Adrenal gland (tissue), 19 donors: ENCODE measurements at regions of chr12 and their contacts with region 1.

Region 1: GRCh38 chr12:71780237-71780822 is 25.7 kb downstream of the RAB21 start:
- DNase-seq: peak; percentile 29 to 79 (median 55)
- H3K4me3 ChIP-seq: no peak overlapping the region
- H3K27ac ChIP-seq: no peak overlapping the region
- H3K4me1 ChIP-seq: peaks cover 0 to 5% of the 10 kb centered on the region in 2 donors
- H3K27me3 ChIP-seq: no peaks in the 10 kb centered on the region
- CTCF ChIP-seq: peak; percentile 61 to 80 (median 70)
- POLR2A ChIP-seq: no peak

Region 2: DNA sequence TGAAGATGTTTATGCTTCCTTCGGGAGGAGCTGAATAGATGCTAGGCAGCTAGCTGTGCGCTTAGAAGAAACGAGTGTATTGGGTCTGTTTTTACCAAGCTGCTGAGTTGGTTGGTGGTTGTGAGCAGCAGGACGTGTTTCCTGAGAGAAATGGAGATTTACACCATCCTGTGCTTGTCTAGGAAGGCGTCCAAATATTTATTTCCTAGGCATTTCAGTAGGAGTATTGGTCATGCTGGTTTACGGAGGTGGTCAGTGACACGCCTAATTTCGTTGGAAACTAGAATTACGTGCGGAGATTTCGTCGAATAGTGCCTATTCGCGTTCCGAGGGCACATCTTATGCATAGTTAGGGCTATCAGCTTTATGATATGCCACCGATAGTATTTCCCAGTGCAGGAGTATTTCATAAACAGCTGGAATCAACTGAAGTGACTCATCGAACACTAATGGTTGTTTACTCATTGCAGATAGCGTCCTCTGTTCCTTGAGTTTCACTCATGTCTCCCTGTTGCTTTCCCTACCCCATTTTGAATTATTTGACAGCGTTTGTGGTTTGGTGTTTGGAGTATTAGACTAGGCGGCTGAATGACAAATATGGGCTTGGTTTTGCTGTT is 60.0 kb after region 1 on chr12:
- intact Hi-C with region 1: loop called in 1 of 2 experiments (anchors 10 kb)
- DNase-seq: peak in 2 of 7 donors; percentile 13 to 21
- H3K4me3 ChIP-seq: peak overlapping the region; percentile 21 to 94 (median 79)
- H3K27ac ChIP-seq: peak overlapping the region; percentile 97 to 99 (median 98)
- H3K4me1 ChIP-seq: peaks cover 11 to 46% of the 10 kb centered on the region in 2 donors
- H3K27me3 ChIP-seq: no peaks in the 10 kb centered on the region
- CTCF ChIP-seq: no peak
- POLR2A ChIP-seq: no peak

Region 3: GRCh38 chr12:71900091-71900490 is 119.8 kb after region 1 on chr12:
- intact Hi-C with region 1: loop called in 1 of 2 experiments (anchors 10 kb)
- DNase-seq: no peak
- H3K4me3 ChIP-seq: no peak overlapping the region
- H3K27ac ChIP-seq: no peak overlapping the region
- H3K4me1 ChIP-seq: no peaks in the 10 kb centered on the region
- H3K27me3 ChIP-seq: no peaks in the 10 kb centered on the region
- CTCF ChIP-seq: peak in 3 of 6 experiments; percentile 6 to 35 (median 16)
- POLR2A ChIP-seq: no peak